ENCODE measurements at regions of chr11 and their contacts with region 1.

Region 1: GRCh38 chr11:93734427-93735222 is 6.7 kb downstream of the TAF1D start:
- DNase-seq: no peak
- ATAC-seq: no peak
- H3K4me3 Mint-ChIP-seq: no peak overlapping the region
- H3K27ac Mint-ChIP-seq: peak overlapping the region; percentile 56
- H3K4me1 Mint-ChIP-seq: peaks cover 62% of the 10 kb centered on the region
- H3K27me3 Mint-ChIP-seq: no peaks in the 10 kb centered on the region
- CTCF ChIP-seq: no peak

Region 2: DNA sequence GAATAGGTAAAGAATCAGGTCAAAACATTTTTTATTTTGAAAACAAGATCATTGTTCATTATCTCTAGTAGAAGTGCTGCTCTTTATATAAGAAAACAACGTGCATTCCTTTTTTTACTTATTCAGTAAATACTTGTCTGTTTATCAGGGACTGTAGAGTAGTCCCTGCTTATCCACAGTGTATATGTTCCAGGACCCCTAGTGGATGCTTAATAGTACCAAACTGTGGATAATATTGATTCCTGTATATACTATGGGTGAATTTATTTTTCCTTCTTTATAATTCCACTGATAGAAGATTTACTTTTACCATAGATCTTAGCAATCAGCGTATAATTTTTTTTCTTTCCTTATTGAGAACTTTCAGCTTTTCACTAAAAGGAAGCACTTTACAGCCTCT is 40.5 kb before region 1 on chr11:
- CTCF ChIA-PET with region 1: no interaction called
- POLR2A ChIA-PET with region 1: interaction called, 3 read pairs
- intact Hi-C with region 1: loop called (anchors 5 kb)
- DNase-seq: no peak
- ATAC-seq: no peak
- H3K4me3 Mint-ChIP-seq: no peak overlapping the region
- H3K27ac Mint-ChIP-seq: no peak overlapping the region
- H3K4me1 Mint-ChIP-seq: peaks cover 6% of the 10 kb centered on the region
- H3K27me3 Mint-ChIP-seq: no peaks in the 10 kb centered on the region
- CTCF ChIP-seq: no peak